Naive thymus-derived CD4-positive, alpha-beta T cell (primary cell): ENCODE measurements at regions of chr10 and their contacts with region 1.

Region 1: DNA sequence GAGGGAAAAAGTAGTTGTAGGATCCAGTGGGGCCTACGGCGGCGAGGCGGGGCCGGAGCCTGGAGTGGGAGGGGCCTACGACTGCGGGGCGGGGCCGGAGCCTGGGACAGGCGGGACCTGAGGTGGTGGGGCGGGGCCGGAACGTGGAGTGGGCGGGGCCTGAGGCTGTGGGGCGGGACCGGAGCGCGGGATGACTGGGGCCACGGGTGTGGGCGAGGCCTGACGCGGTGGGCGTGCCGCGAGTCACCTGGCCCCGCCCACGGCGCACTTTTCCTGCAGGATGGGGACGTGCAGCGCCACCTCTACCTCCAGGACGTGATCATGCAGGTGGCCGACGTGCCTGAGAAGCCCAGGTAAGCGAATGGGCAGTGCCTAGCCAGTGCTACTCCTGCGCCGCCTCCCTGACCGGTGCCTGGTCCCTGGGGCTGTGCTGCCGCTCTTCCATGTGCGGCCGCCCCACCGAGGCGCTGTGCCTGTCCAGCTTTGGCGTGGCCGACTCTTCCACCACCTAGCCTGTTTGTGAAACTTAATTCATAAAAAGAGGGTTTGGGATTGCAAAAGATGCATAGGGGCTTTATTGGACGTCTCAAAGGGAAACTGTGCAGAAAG is 501 bp downstream of the ZNF511 start:
- DNase-seq: peak; percentile 92 to 99 (median 95)
- ATAC-seq: peak; percentile 90
- H3K4me3 ChIP-seq: peak overlapping the region; percentile 66
- H3K4me3 Mint-ChIP-seq: peak overlapping the region; percentile 53 to 97 (median 77)
- H3K27ac ChIP-seq: peak overlapping the region; percentile 100
- H3K27ac Mint-ChIP-seq: peak overlapping the region in 8 of 9 donors; percentile 72 to 98 (median 88)
- H3K4me1 ChIP-seq: peaks cover 8 to 10% of the 10 kb centered on the region in 2 donors
- H3K4me1 Mint-ChIP-seq: peaks cover 12 to 39% (median 30%) of the 10 kb centered on the region in 7 donors
- H3K27me3 ChIP-seq: no peaks in the 10 kb centered on the region
- H3K27me3 Mint-ChIP-seq: peaks cover 0 to 5% (median 0%) of the 10 kb centered on the region in 5 donors

Region 2: DNA sequence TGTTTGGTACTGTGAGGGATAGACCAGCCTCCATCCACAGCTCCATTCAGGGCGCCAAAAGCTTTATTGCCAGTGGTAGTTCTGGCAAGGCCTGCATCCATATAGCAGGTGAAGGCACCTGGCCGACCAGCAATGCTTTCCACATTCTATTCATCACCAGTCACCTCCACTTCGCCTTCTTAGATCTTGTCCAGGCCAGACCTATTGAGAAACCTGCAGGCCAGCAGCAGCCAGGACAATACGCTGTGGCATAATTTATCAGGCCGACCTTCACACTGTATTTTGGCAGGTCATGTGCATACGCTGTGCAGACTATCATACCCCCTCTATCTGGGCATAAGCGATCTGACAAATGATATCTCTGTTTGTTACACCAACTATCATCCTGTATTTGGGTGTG is 164.4 kb before region 1 on chr10:
- CTCF ChIA-PET with region 1: no interaction called
- POLR2A ChIA-PET with region 1: no interaction called
- intact Hi-C with region 1: loop called in 1 of 2 experiments (anchors 2 kb)
- DNase-seq: no peak
- ATAC-seq: no peak
- H3K4me3 ChIP-seq: no peak overlapping the region
- H3K4me3 Mint-ChIP-seq: no peak overlapping the region
- H3K27ac ChIP-seq: no peak overlapping the region
- H3K27ac Mint-ChIP-seq: no peak overlapping the region
- H3K4me1 ChIP-seq: no peaks in the 10 kb centered on the region
- H3K4me1 Mint-ChIP-seq: peaks cover 4 to 10% (median 6%) of the 10 kb centered on the region in 7 donors
- H3K27me3 ChIP-seq: no peaks in the 10 kb centered on the region
- H3K27me3 Mint-ChIP-seq: peaks cover 43 to 61% (median 56%) of the 10 kb centered on the region in 5 donors

Region 3: GRCh38 chr10:133278577-133279265 is 30.5 kb before region 1 on chr10:
- CTCF ChIA-PET with region 1: interaction called, 5 read pairs
- POLR2A ChIA-PET with region 1: no interaction called
- intact Hi-C with region 1: loop called (anchors 1 kb)
- DNase-seq: peak in 3 of 9 donors; percentile 17 to 60 (median 53)
- ATAC-seq: peak; percentile 69
- H3K4me3 ChIP-seq: peak overlapping the region; percentile 27
- H3K4me3 Mint-ChIP-seq: peak overlapping the region; percentile 50 to 84 (median 66)
- H3K27ac ChIP-seq: peak overlapping the region; percentile 50
- H3K27ac Mint-ChIP-seq: peak overlapping the region; percentile 66 to 93 (median 86)
- H3K4me1 ChIP-seq: peaks cover 22 to 34% of the 10 kb centered on the region in 2 donors
- H3K4me1 Mint-ChIP-seq: peaks cover 11 to 36% (median 21%) of the 10 kb centered on the region in 7 donors
- H3K27me3 ChIP-seq: no peaks in the 10 kb centered on the region
- H3K27me3 Mint-ChIP-seq: no peaks in the 10 kb centered on the region

Region 4: DNA sequence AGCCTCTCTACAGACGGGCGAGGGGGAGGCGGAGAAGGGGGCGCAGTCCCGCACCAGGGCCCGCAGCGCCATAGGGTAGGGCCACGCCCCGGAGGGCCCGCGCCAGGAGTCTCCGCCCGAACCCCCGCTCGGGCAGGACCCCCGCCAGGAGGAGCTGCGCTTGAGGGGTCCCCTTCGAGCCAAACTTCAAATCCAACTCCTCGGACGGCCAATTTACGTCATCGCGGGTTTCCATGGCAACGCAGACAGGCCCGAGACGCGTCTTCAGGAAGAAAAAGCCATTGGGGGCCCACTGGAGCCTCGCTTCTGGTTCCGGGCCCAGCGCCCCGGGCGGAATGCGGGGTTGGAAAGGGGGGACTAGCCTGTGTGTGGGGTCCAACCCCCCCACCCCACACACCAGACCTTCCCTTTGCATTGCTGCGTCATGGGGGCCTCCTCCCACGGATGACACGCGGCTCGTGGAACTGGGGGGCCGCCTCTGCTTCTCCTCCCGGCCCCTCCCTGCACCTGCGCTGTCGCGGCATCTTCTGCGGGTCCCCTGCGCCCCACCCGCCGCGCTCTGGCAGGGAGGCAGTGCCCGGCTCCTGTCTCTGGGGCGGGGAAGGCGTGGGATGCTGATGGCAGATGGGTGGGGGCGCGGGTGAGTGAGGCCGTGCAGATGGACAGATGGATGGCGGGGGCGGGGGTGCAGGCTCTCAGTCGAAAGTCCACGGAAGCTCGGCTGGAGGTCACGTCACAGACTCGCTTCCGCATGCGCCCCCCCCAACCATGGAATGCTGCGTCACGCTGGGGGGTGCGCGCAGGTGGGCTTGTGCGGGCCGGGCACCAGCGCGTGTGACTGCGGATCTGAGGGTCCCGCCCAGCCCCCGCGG is 26.3 kb after region 1 on chr10:
- CTCF ChIA-PET with region 1: no interaction called
- POLR2A ChIA-PET with region 1: interaction called, 4 read pairs
- intact Hi-C with region 1: loop called in 1 of 2 experiments (anchors 1 kb)
- DNase-seq: peak; percentile 56 to 95 (median 81)
- ATAC-seq: peak; percentile 53
- H3K4me3 ChIP-seq: peak overlapping the region; percentile 65
- H3K4me3 Mint-ChIP-seq: peak overlapping the region in 9 of 10 donors; percentile 48 to 81 (median 68)
- H3K27ac ChIP-seq: peak overlapping the region; percentile 78
- H3K27ac Mint-ChIP-seq: peak overlapping the region in 8 of 9 donors; percentile 50 to 93 (median 78)
- H3K4me1 ChIP-seq: peaks cover 10 to 20% of the 10 kb centered on the region in 2 donors
- H3K4me1 Mint-ChIP-seq: peaks cover 0 to 5% (median 0%) of the 10 kb centered on the region in 7 donors
- H3K27me3 ChIP-seq: no peaks in the 10 kb centered on the region
- H3K27me3 Mint-ChIP-seq: peaks cover 0 to 41% (median 0%) of the 10 kb centered on the region in 5 donors

Region 5: DNA sequence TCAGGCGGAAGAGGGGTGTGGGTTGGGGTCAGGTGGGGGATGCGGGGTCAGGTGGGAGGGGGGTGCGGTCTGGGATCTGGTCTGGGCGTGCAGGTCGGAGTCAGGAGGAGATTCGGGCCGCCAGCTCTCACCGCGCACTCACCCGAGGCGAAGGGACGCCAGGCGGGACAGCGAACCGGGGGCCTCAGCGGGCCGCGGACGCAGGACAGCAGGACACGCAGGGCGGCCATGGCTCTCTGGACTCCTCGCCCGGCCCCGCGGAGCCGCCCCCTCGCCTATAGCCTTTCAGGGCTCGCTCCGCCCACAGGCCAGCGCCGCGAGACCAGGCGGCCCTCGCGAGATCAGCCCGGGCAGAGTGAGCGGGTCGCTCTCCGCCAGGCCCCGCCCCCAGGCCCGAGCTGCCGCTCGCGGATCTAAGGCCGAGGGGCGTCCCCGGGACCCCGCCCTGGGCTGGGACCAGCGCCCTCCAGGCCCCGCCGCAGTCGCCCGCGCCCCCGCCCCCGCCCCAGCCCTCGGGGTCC is 63.9 kb after region 1 on chr10 and contains the start of gene ECHS1:
- CTCF ChIA-PET with region 1: no interaction called
- POLR2A ChIA-PET with region 1: no interaction called
- intact Hi-C with region 1: loop called (anchors 1 kb)
- DNase-seq: peak; percentile 81 to 99 (median 90)
- ATAC-seq: peak; percentile 99
- H3K4me3 ChIP-seq: peak within 1 kb of the TSS; percentile 68
- H3K4me3 Mint-ChIP-seq: peak within 1 kb of the TSS; percentile 57 to 92 (median 81)
- H3K27ac ChIP-seq: peak within 1 kb of the TSS; percentile 82
- H3K27ac Mint-ChIP-seq: peak within 1 kb of the TSS; percentile 14 to 83 (median 67)
- H3K4me1 ChIP-seq: peaks cover 0 to 3% of the 10 kb centered on the region in 2 donors
- H3K4me1 Mint-ChIP-seq: peaks cover 0 to 21% (median 12%) of the 10 kb centered on the region in 7 donors
- H3K27me3 ChIP-seq: no peaks in the 10 kb centered on the region
- H3K27me3 Mint-ChIP-seq: peaks cover 0 to 14% (median 0%) of the 10 kb centered on the region in 5 donors
- total RNA-seq, gene ECHS1: 17.5 to 39.8 (median 28.9) TPM

Region 6: DNA sequence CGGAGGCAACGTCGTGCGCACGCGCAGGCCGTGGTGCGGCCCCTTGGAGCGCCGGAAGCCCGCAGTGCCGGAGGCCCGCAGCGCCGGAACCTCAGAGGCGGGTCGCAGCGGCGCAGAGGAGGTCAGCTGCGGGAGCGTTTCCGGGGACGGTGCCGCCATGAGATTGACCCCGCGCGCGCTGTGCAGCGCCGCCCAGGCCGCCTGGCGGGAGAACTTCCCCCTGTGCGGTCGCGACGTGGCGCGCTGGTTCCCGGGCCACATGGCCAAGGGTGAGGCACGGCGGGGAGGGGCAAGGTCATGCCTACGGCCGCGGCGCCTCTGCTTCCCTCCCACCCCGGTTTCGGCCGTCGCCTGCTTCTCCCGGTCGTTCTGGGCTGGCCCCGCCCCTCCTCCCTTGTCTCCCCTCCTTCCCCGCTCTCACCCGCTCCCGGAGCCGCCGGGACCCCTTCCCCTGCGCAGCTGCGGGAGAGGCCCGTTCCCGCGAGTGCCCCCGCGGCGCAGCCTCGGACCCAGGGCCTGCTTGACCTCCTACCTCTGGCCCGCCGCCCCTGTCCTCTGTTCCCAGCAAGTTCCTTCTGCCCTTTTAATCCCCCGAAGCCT is 84.9 kb after region 1 on chr10 and contains the start of gene MTG1:
- CTCF ChIA-PET with region 1: no interaction called
- POLR2A ChIA-PET with region 1: interaction called, 5 read pairs
- intact Hi-C with region 1: loop called (anchors 1 kb)
- DNase-seq: peak; percentile 84 to 99 (median 91)
- ATAC-seq: peak; percentile 94
- H3K4me3 ChIP-seq: peak within 1 kb of the TSS; percentile 72
- H3K4me3 Mint-ChIP-seq: peak within 1 kb of the TSS; percentile 89 to 98 (median 92)
- H3K27ac ChIP-seq: peak within 1 kb of the TSS; percentile 81
- H3K27ac Mint-ChIP-seq: peak within 1 kb of the TSS; percentile 71 to 96 (median 89)
- H3K4me1 ChIP-seq: peaks cover 32 to 33% of the 10 kb centered on the region in 2 donors
- H3K4me1 Mint-ChIP-seq: peaks cover 19 to 49% (median 39%) of the 10 kb centered on the region in 7 donors
- H3K27me3 ChIP-seq: no peaks in the 10 kb centered on the region
- H3K27me3 Mint-ChIP-seq: peaks cover 0 to 2% (median 0%) of the 10 kb centered on the region in 5 donors
- total RNA-seq, gene MTG1: 51.0 to 67.1 (median 57.2) TPM